ENCODE measurements at regions of chr5 and their contacts with region 1.

Region 1: DNA sequence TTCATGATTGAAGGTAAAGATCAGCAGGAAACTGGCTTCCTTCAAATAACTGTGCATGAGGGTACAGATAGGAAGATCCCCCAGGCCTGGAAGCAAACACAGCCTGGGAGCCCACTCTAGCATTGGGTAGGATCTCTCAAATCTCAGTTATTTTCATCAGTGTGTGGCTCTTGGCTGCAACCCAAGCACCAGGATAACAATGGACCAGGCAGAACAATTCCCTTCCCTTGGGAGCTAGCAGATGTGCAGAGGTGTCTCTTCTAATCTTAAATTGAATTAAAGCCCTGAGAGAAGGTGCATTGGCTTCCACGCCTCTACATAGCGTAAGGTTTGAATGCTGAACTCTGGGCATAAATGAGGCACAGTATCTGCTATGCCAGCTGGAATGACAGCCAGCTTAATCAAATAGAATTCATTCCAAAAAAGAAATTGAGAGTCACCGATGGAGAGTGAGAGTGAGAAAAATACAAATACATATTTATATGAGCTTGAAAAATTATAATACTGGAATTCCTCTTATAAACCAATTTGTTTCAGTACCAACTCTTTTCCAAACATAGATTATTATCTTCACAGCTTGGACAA is 957.3 kb downstream of the CDH12 start:
- DNase-seq: peak; percentile 49
- H3K4me3 ChIP-seq: no peak overlapping the region
- H3K27ac ChIP-seq: no peak overlapping the region
- H3K4me1 ChIP-seq: peaks cover 8% of the 10 kb centered on the region
- H3K27me3 ChIP-seq: no peaks in the 10 kb centered on the region
- CTCF ChIP-seq: no peak
- POLR2A ChIP-seq: no peak

Region 2: DNA sequence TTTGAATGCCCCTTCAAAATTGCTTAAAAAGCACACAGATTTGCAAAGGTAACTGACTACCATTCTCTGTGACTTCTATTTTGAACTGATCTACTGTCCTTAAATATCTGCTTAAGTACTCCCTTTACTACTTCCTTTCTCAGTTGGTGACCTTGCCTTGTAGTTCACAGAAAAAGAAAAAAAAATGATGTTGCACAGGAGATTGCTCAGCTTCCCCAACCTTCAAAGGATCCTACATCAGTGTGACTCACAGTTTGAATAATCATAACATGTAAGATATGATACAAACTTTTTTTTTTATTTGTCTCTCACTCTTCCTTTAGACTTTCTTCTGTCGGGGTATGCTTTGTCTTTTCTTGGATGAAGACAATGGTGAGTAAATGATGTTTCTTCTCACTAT is 72.3 kb before region 1 on chr5:
- CTCF ChIA-PET with region 1: no interaction called
- POLR2A ChIA-PET with region 1: no interaction called
- dilution Hi-C with region 1: no loop called
- intact Hi-C with region 1: loop called (anchors 5 kb)
- DNase-seq: peak; percentile 81
- H3K4me3 ChIP-seq: no peak overlapping the region
- H3K27ac ChIP-seq: peak overlapping the region; percentile 60
- H3K4me1 ChIP-seq: peaks cover 22% of the 10 kb centered on the region
- H3K27me3 ChIP-seq: no peaks in the 10 kb centered on the region
- CTCF ChIP-seq: no peak
- POLR2A ChIP-seq: peak; percentile 24

Measured in endothelial cell of umbilical vein (primary cell).